CD8-positive, alpha-beta T cell (primary cell): ENCODE measurements at regions of chr11 and their contacts with region 1.

Region 1: GRCh38 chr11:93710239-93710638 is 31.1 kb downstream of the TAF1D start:
- DNase-seq: no peak
- ATAC-seq: no peak
- H3K4me3 ChIP-seq: no peak overlapping the region
- H3K4me3 Mint-ChIP-seq: no peak overlapping the region
- H3K27ac ChIP-seq: no peak overlapping the region
- H3K27ac Mint-ChIP-seq: no peak overlapping the region
- H3K4me1 ChIP-seq: no peaks in the 10 kb centered on the region
- H3K4me1 Mint-ChIP-seq: peaks cover 3% of the 10 kb centered on the region
- H3K27me3 ChIP-seq: no peaks in the 10 kb centered on the region
- H3K27me3 Mint-ChIP-seq: no peaks in the 10 kb centered on the region
- CTCF ChIP-seq: no peak

Region 2: DNA sequence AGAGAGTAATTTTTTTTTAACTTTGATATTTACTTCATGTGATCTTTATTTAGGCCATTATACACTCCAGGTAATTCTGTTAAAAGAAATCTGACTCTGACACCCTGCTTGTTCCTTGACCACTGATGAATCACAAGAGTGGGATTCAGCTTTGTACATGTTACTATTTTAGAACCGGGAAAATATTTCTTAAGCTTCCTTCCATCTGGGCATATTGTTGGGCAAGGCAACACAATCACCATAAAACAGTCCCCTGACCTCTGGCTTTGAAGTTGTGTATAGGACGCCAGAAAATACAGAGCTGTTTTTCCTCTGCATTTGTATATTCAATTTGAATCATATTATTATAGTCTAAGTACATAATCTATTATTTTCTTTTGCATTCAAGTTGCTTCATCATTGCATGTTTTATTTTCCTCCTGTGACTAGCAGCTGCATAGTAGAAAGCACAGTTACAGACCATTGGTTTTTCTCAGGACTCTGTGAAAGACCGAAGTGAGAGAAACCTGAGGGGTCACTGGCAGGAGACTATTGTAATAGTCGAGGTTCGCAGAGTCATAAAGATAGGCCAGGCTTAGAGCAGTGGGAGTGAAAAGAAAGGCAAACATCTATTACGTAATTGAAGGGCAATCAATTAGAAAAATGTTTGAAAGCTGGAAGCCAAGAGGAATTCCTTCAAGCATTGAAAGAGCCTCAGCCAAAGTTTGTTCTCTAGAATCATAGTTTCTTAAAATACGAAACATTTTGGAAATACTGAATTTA is 460.6 kb before region 1 on chr11:
- CTCF ChIA-PET with region 1: no interaction called
- POLR2A ChIA-PET with region 1: no interaction called
- intact Hi-C with region 1: loop called in 1 of 2 experiments (anchors 5 kb)
- DNase-seq: no peak
- ATAC-seq: no peak
- H3K4me3 ChIP-seq: no peak overlapping the region
- H3K4me3 Mint-ChIP-seq: no peak overlapping the region
- H3K27ac ChIP-seq: no peak overlapping the region
- H3K27ac Mint-ChIP-seq: no peak overlapping the region
- H3K4me1 ChIP-seq: no peaks in the 10 kb centered on the region
- H3K4me1 Mint-ChIP-seq: no peaks in the 10 kb centered on the region
- H3K27me3 ChIP-seq: no peaks in the 10 kb centered on the region
- H3K27me3 Mint-ChIP-seq: peaks cover 9% of the 10 kb centered on the region
- CTCF ChIP-seq: no peak